Sigmoid colon (tissue), 7 donors: ENCODE measurements at regions of chr1 and their contacts with region 1.

Region 1: DNA sequence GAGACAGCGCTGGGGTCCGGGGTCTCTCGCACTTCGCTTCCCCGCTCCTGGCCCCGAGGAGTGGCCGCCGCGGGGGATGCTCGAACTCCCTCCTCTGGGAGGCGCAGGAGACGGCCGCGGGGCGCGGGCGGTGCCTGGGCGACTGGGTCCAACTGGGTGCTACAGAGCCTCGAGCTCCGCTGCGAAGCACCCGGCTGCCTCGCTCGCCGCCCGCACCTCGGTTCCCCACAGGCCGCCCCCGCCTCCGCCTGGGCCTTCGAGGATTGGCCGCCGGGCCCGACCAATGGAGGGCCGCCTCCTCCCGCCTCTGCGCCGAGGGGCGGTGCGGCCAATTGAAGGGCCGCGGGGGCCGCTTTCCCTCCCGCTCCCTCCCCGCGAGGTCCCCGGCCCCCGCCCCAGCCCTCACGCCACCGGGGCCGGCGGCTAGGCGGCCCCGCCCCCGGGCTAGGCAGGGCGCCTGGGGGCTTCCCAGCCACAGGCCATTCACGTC is at the start of gene CNN3:
- DNase-seq: peak; percentile 97
- H3K4me3 ChIP-seq: peak within 1 kb of the TSS; percentile 72 to 92 (median 87)
- H3K27ac ChIP-seq: peak within 1 kb of the TSS; percentile 98 to 100 (median 98)
- H3K4me1 ChIP-seq: peaks cover 0 to 64% (median 56%) of the 10 kb centered on the region in 4 donors
- H3K27me3 ChIP-seq: no peaks in the 10 kb centered on the region
- CTCF ChIP-seq: peak in 1 of 4 experiments; percentile 9
- EP300 ChIP-seq: peak in 1 of 4 donors; percentile 21
- POLR2A ChIP-seq: peak; percentile 97 to 98
- total RNA-seq, gene CNN3: 157 to 247 (median 170) TPM

Region 2: DNA sequence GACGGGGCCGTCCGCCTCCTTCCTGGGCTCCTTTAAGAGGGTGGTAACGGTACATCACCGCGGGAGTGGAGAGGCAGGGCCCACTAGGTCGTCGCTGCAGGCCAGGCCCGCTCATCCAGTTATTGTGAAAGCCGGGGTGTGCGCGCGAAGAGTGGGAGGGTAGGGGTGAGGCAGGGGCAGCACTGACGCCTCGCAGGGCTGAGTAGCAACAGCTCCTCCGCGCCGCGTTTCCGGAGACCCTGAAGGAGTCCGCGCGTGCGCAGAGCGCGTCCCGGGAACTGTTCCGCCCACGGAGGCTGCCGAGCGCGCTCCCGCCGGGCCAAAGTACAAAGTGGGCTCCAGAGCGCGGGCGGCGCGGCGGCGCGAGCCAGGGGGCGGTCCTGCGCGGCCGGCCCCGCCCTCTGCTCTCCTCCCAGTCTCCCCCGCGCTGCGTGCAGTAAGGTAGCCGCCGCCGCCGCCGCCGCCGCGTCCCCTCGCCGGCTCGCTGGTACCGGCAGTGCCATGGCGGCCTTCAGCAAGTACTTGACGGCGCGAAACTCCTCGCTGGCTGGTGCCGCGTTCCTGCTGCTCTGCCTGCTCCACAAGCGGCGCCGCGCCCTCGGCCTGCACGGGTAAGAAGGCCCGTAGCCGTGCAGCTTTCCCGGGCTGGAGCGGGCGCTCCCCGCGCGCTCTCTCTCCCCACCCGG is 508.8 kb before region 1 on chr1 and contains the start of gene ABCD3:
- intact Hi-C with region 1: loop called (anchors 10 kb)
- DNase-seq: peak; percentile 99
- H3K4me3 ChIP-seq: peak within 1 kb of the TSS; percentile 89 to 97 (median 96)
- H3K27ac ChIP-seq: peak within 1 kb of the TSS; percentile 92 to 96 (median 94)
- H3K4me1 ChIP-seq: peaks cover 0 to 40% (median 32%) of the 10 kb centered on the region in 4 donors
- H3K27me3 ChIP-seq: no peaks in the 10 kb centered on the region
- CTCF ChIP-seq: no peak
- EP300 ChIP-seq: peak in 1 of 4 donors; percentile 22
- POLR2A ChIP-seq: peak; percentile 74 to 79
- total RNA-seq, gene ABCD3: 22.8 to 55.6 (median 31.7) TPM

Region 3: GRCh38 chr1:94854458-94855306 is 72.3 kb before region 1 on chr1:
- intact Hi-C with region 1: loop called (anchors 1 kb)
- DNase-seq: peak; percentile 96
- H3K4me3 ChIP-seq: peak overlapping the region; percentile 29 to 49 (median 48)
- H3K27ac ChIP-seq: peak overlapping the region; percentile 80 to 90 (median 84)
- H3K4me1 ChIP-seq: peaks cover 0 to 25% (median 18%) of the 10 kb centered on the region in 4 donors
- H3K27me3 ChIP-seq: no peaks in the 10 kb centered on the region
- CTCF ChIP-seq: peak; percentile 87 to 99 (median 98)
- EP300 ChIP-seq: no peak
- POLR2A ChIP-seq: no peak

Region 4: GRCh38 chr1:94863919-94864318 is 63.0 kb before region 1 on chr1:
- intact Hi-C with region 1: loop called (anchors 1 kb)
- DNase-seq: peak; percentile 88
- H3K4me3 ChIP-seq: peak overlapping the region in 3 of 4 donors; percentile 18 to 28 (median 25)
- H3K27ac ChIP-seq: peak overlapping the region; percentile 86 to 92 (median 90)
- H3K4me1 ChIP-seq: peaks cover 0 to 75% (median 60%) of the 10 kb centered on the region in 4 donors
- H3K27me3 ChIP-seq: no peaks in the 10 kb centered on the region
- CTCF ChIP-seq: no peak
- EP300 ChIP-seq: peak in 3 of 4 donors; percentile 89 to 94 (median 92)
- POLR2A ChIP-seq: peak in 1 of 2 donors; percentile 37

Region 5: DNA sequence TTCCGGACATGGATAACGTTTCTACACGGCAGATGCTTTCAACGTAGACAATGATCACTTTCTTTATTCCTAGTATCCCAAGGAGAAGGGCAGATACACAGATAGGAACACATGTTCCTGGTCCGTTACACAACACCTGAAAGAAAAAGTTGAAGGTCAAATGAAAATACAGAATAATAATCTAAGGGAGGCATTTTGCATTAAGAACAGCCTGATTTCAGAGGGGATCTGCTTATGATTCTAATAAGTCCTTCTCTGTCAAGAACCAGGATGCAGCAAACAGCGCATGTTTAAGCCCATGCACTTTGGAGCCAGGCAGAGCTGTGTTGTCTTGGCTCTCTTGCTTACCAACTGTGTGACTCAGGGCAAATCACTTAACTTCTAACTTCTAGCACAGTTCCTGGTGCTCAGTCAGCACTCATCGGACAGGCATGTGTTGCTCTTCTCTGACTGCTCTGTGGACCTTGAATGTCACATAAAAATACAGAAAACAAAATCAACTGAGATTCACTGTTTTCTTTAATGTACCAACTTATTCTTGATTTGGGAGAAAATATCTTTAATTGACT is 56.3 kb after region 1 on chr1:
- intact Hi-C with region 1: loop called (anchors 5 kb)
- DNase-seq: peak; percentile 66
- H3K4me3 ChIP-seq: no peak overlapping the region
- H3K27ac ChIP-seq: peak overlapping the region in 3 of 4 donors; percentile 14 to 58 (median 44)
- H3K4me1 ChIP-seq: peaks cover 0 to 16% (median 5%) of the 10 kb centered on the region in 4 donors
- H3K27me3 ChIP-seq: no peaks in the 10 kb centered on the region
- CTCF ChIP-seq: no peak
- EP300 ChIP-seq: no peak
- POLR2A ChIP-seq: no peak

Region 6: DNA sequence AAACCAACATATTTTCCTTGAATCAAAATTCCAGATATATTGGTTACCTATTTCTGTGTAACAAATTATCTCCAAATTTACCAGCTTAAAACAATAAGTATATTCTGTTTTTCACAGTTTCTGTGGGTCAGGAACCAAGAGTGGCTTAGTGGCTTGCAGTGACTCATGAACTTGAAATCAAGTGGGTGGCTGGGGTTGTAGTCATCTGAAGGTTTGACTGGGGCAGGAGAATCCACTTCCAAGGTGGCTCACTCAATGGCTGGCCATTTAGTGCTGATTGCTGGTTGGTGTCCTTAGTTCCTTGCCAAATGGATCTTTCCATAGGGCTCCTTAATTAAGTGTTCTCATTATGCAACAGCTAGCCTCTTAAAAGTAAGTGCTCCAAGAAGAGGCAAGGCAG is 102.0 kb after region 1 on chr1:
- intact Hi-C with region 1: no loop called
- DNase-seq: no peak
- H3K4me3 ChIP-seq: no peak overlapping the region
- H3K27ac ChIP-seq: no peak overlapping the region
- H3K4me1 ChIP-seq: peaks cover 0 to under 1% (median 0%) of the 10 kb centered on the region in 4 donors
- H3K27me3 ChIP-seq: no peaks in the 10 kb centered on the region
- CTCF ChIP-seq: no peak
- EP300 ChIP-seq: no peak
- POLR2A ChIP-seq: no peak

Region 7: DNA sequence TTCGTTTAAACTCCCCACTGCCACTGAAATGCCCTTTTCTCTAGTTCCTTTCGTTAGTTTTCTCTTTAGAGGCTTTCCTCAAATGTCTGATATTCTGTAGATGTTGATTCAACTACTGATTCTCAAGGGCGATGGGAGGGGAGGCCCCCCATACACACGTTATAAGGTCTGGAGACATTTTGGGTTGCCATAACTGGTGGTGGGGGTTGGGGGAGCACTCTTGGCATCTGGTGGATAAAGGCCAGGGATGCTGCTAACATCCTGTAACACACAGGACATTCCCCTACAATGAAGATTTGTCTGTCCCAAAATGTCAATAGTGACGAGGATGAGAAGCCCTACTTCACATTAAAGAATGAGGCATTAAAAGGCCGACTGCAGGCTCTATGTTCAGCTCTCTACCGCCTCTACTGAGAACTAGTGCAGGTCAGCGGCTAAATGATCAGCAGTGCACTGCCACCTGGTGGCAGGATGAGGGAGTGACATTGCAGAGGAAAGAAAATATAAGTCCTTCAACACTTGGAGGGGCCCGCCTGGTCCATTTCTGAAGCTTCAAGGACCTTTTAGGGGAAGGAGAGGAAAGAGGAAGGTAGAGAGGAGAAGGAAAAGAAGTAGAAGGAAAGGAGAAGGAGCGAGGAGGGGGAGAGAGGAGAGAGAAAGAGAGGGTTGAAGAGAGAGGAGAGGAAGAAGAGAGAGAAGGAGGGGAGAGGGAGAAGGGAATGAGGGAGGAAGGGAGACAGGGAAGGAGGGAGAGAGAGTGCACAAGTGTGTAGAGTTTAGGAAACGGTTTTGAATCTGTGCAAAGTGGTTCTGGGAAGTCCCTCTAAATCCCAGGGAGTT is 116.4 kb after region 1 on chr1:
- intact Hi-C with region 1: loop called (anchors 2 kb)
- DNase-seq: peak; percentile 93
- H3K4me3 ChIP-seq: no peak overlapping the region
- H3K27ac ChIP-seq: peak overlapping the region; percentile 74 to 81 (median 79)
- H3K4me1 ChIP-seq: peaks cover 0 to 23% (median 19%) of the 10 kb centered on the region in 4 donors
- H3K27me3 ChIP-seq: no peaks in the 10 kb centered on the region
- CTCF ChIP-seq: peak; percentile 99 to 100 (median 99)
- EP300 ChIP-seq: no peak
- POLR2A ChIP-seq: no peak